PC-3 (cell line): ENCODE measurements at regions of chr16 and their contacts with region 1.

Region 1: DNA sequence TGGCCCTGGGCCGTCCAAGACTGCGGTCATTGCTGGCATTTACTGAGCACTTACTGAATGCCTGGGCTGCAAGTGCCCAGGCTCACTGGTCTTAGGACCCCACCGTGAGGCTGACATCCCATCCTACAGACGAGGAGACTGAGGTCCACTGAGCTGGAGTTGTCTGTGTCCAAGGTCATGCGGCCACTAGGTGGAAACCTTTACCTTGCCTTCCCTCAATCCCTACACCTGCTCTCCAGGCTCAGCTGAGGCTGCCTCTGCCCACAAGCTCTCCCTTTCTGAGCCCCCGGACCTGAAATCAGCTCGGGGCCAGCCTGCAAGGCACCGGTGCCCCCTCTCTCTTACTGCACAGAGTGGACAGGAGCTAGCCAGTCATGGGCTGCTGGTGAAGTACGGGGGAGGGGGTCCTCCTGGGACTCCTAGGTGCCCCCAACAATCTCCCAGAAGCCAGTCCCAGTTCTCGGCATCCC is 1.5 kb downstream of the CASKIN1 start:
- DNase-seq: peak; percentile 64
- ATAC-seq: peak; percentile 81
- H3K4me3 ChIP-seq: peak overlapping the region; percentile 59; the same call in 1 of the 2 replicates
- H3K27ac ChIP-seq: no peak overlapping the region
- H3K4me1 ChIP-seq: peaks cover 12% of the 10 kb centered on the region; the same call in 1 of the 2 replicates
- H3K27me3 ChIP-seq: no peaks in the 10 kb centered on the region
- CTCF ChIP-seq: peak; percentile 57

Region 2: DNA sequence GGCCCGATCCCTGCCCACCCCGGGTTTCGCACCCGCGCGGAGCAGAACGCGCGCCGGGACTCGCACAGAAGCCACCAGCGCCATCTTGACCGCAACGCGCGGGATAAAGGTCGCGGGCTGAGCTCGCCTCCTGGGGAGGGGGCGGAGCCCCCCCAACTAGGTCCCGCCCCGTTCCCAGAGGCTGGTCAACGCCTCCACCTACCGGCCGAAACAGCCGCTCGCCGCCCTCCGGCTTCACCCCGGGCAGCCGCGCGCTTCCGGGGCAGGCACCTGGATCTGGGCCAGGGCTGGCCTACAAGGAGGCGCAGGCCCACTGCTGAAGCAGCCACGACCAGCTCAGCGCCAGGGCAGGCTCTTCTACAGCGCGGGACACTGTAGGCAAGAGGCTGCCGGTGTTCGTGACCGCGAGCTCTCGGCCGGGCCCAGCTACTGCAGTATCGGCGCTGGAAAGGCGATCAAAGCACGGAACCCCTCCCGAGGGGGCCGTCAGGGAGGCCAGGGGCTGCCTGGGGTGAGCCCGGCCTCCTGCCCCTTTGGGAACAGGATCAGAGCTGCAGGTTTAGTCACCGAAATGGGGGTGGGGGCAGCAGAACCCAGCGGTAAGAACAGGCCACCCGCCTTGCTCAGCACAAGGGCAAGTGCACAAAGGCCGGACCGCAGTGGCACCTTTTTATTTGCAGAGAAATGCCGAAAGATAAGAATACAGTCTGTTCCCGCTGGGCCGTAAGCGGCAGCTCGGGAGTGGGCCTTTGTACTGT is 56.8 kb after region 1 on chr16 and contains the start of gene ECI1:
- CTCF ChIA-PET with region 1: interaction called, 18 read pairs
- POLR2A ChIA-PET with region 1: interaction called, 8 read pairs
- intact Hi-C with region 1: no loop called
- DNase-seq: peak; percentile 93
- ATAC-seq: peak; percentile 79
- H3K4me3 ChIP-seq: peak within 1 kb of the TSS; percentile 81
- H3K27ac ChIP-seq: peak within 1 kb of the TSS; percentile 67
- H3K4me1 ChIP-seq: peaks cover 9% of the 10 kb centered on the region
- H3K27me3 ChIP-seq: no peaks in the 10 kb centered on the region
- CTCF ChIP-seq: peak; percentile 49; the same call in 1 of the 2 replicates
- total RNA-seq, gene ECI1: 71.7 and 90.5 TPM in 2 replicates

Region 3: GRCh38 chr16:2271848-2272461 is 77.1 kb after region 1 on chr16:
- CTCF ChIA-PET with region 1: no interaction called
- POLR2A ChIA-PET with region 1: no interaction called
- intact Hi-C with region 1: no loop called
- DNase-seq: no peak
- ATAC-seq: no peak
- H3K4me3 ChIP-seq: no peak overlapping the region
- H3K27ac ChIP-seq: no peak overlapping the region
- H3K4me1 ChIP-seq: peaks cover 7% of the 10 kb centered on the region; the same call in 1 of the 2 replicates
- H3K27me3 ChIP-seq: no peaks in the 10 kb centered on the region
- CTCF ChIP-seq: no peak

Region 4: DNA sequence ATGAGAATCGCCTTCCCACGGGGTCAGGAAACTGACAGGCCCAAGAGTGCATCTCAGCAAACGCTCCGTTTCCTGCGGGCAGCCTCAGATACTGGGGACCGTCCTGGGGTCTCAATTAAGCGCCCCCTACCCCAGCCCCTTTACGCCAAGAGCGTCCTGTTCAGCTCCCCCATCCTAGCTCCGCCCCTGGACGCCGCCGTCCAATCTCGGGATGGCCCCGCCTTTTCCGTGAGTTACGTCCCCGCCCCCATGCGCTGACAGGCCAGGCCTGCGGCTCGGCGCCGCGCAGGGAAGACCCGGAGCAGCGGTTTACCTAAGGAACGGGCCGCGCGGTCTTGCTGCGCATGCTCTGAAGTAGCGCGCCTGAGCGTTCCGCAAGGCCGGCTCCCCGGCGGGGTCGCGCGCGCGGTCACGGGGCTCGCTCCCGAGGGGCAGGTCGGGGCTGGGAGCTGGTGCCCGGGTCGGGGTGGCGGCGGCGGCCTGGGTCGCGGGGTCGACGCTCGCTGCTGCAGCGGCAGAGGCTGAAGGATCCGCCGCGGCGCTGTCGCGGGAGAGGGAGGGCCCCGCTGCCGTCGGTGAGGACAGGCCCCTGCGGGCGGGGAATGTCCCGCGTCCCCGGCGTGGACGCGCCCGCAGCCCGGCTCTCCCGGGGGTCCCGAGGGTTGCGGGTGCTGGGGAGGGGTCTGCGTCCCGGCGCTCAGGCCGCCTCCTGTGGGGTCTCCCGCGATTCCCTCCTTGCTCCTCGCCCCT is 716.9 kb after region 1 on chr16 and contains the start of gene FLYWCH1:
- CTCF ChIA-PET with region 1: no interaction called
- POLR2A ChIA-PET with region 1: no interaction called
- intact Hi-C with region 1: no loop called
- DNase-seq: peak; percentile 96
- ATAC-seq: peak; percentile 88
- H3K4me3 ChIP-seq: peak within 1 kb of the TSS; percentile 95
- H3K27ac ChIP-seq: no peak within 1 kb of the TSS
- H3K4me1 ChIP-seq: peaks cover 29% of the 10 kb centered on the region
- H3K27me3 ChIP-seq: no peaks in the 10 kb centered on the region
- CTCF ChIP-seq: no peak
- total RNA-seq, gene FLYWCH1: 41.4 and 54.7 TPM in 2 replicates